ENCODE measurements at regions of chr22 and their contacts with region 1.

Region 1: DNA sequence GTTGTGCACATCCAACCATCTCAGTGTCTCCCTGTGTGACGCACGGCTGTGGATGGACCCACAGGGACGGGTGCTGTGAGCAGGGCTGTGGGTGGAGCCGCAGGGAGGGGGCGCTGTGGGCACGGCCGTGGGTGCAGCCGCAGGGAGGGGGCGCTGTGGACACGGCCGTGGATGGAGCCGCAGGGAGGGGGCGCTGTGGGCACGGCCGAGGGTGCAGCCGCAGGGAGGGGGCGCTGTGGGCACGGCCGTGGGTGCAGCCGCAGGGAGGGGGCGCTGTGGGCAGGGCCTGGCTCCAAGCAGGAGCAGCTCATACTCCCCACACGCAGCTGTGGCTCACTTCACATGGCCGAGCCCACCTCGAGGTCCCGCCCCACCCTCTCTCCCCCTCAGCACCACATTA is 6.0 kb upstream of the MAPK11 start:
- DNase-seq: peak in 1 of 2 experiments; percentile 77
- H3K4me3 ChIP-seq: no peak overlapping the region
- H3K27ac ChIP-seq: no peak overlapping the region
- H3K4me1 ChIP-seq: peaks cover under 1 to 8% (median 4%) of the 10 kb centered on the region in 4 experiments; a peak in 4 of 7 replicates
- H3K27me3 ChIP-seq: peaks cover under 1 to 5% (median 4%) of the 10 kb centered on the region in 4 experiments; a peak in 5 of 7 replicates
- CTCF ChIP-seq: peak; percentile 79 to 99 (median 91)
- EP300 ChIP-seq: no peak
- POLR2A ChIP-seq: no peak
- RAD21 ChIP-seq: peak in 1 of 2 experiments; percentile 36; a peak in 3 of 4 replicates

Region 2: GRCh38 chr22:50200461-50201190 is 75.5 kb before region 1 on chr22 and contains the start of gene SELENOO:
- CTCF ChIA-PET with region 1: no interaction called
- POLR2A ChIA-PET with region 1: no interaction called
- DNase-seq: peak; percentile 47 to 85
- H3K4me3 ChIP-seq: peak within 1 kb of the TSS; percentile 41 to 69 (median 64)
- H3K27ac ChIP-seq: no peak within 1 kb of the TSS
- H3K4me1 ChIP-seq: peaks cover 0 to 7% (median 5%) of the 10 kb centered on the region in 4 experiments; a peak in 6 of 7 replicates
- H3K27me3 ChIP-seq: no peaks in the 10 kb centered on the region
- CTCF ChIP-seq: no peak
- EP300 ChIP-seq: no peak
- POLR2A ChIP-seq: peak in 1 of 2 experiments; percentile 48; a peak in 1 of 3 replicates
- RAD21 ChIP-seq: no peak
- total RNA-seq, gene SELENOO: 16.8 and 18.6 TPM in 2 replicates

Region 3: GRCh38 chr22:50293441-50294318 is 17.5 kb after region 1 on chr22:
- CTCF ChIA-PET with region 1: interaction called, 27 read pairs
- POLR2A ChIA-PET with region 1: interaction called, 7 read pairs
- DNase-seq: peak in 1 of 2 experiments; percentile 90
- H3K4me3 ChIP-seq: peak overlapping the region; percentile 19 to 52 (median 24); a peak in 5 of 8 replicates
- H3K27ac ChIP-seq: peak overlapping the region; percentile 77; the same call in 1 of the 2 replicates
- H3K4me1 ChIP-seq: peaks cover 0 to 32% (median 21%) of the 10 kb centered on the region in 4 experiments; a peak in 6 of 7 replicates
- H3K27me3 ChIP-seq: no peaks in the 10 kb centered on the region
- CTCF ChIP-seq: no peak
- EP300 ChIP-seq: peak in 1 of 2 experiments; percentile 65; a peak in 1 of 3 replicates
- POLR2A ChIP-seq: no peak
- RAD21 ChIP-seq: no peak

Region 4: DNA sequence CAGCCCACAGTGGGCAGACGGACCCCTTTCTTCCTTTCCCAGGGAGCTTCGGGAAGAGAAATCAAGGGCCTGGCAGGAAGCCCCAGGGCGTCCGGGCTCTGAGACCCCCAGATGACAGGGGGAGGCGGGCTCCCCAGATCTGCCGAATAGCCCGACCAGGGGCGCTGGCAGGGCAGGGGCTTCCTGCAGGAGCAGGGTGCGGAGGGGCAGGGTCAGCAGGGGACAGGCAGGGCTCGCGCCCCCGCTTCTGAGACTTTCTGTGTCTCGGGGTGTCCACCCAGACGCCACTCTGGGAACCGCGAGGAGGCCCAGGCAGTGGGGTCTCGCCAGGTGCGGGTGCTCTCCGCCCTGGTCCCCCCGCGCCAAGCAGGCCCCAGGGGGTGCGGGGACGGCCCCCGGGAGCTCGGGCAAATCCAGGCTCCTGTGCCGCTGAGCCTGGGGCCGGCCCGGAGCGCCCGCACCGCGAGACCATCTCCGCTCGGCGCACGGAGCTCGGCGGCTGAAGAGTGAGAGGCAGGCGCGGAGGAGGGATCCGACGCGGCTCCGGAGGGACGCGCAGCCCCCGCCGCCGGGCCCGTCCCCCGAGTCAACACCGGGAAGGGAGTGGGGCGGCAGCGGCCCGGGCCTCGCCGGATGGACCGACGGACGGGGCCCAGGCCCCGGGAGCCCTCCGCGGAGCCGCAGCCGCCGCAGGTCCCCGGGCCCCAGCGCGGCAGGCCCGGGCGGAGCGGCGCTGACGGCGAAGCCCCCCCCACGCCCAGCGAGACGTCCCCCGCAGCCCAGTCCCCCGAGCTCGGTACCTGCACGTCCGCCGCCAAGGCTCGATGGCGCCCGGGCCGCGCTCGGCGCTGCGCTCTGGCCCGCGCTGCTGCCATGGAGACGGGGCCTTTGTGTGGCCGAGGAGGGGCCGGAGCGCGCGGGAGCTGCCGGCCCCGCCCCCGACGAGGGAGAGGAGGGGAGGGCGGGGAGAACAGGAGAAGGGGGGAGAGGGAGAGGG is 30.9 kb after region 1 on chr22 and contains the start of gene PLXNB2:
- CTCF ChIA-PET with region 1: interaction called, 16 read pairs
- POLR2A ChIA-PET with region 1: no interaction called
- DNase-seq: peak in 1 of 2 experiments; percentile 78
- H3K4me3 ChIP-seq: peak within 1 kb of the TSS; percentile 64 to 70 (median 66)
- H3K27ac ChIP-seq: no peak within 1 kb of the TSS; the same call in 1 of the 2 replicates
- H3K4me1 ChIP-seq: peaks cover 3 to 36% (median 20%) of the 10 kb centered on the region in 4 experiments
- H3K27me3 ChIP-seq: no peaks in the 10 kb centered on the region; a peak in 2 of 7 replicates
- CTCF ChIP-seq: no peak
- EP300 ChIP-seq: no peak
- POLR2A ChIP-seq: 0 out of 3 replicates have a peak, but pooled peaks of 1 of the 2 experiments have one; percentile 20
- RAD21 ChIP-seq: no peak
- total RNA-seq, gene PLXNB2: 92.8 and 106 TPM in 2 replicates

Region 5: GRCh38 chr22:50326959-50327710 is 51.0 kb after region 1 on chr22 and contains the start of gene DENND6B:
- CTCF ChIA-PET with region 1: interaction called, 24 read pairs
- POLR2A ChIA-PET with region 1: interaction called, 4 read pairs
- DNase-seq: peak in 1 of 2 experiments; percentile 86
- H3K4me3 ChIP-seq: peak within 1 kb of the TSS; percentile 64 to 84 (median 69)
- H3K27ac ChIP-seq: no peak within 1 kb of the TSS; the same call in 1 of the 2 replicates
- H3K4me1 ChIP-seq: peaks cover 0 to 8% (median 2%) of the 10 kb centered on the region in 4 experiments; a peak in 4 of 7 replicates
- H3K27me3 ChIP-seq: peaks cover 1 to 13% (median 12%) of the 10 kb centered on the region in 4 experiments; a peak in 6 of 7 replicates
- CTCF ChIP-seq: peak; percentile 56 to 90 (median 59)
- EP300 ChIP-seq: no peak
- POLR2A ChIP-seq: peak in 1 of 2 experiments; percentile 54; a peak in 1 of 3 replicates
- RAD21 ChIP-seq: peak; percentile 15 to 63; a peak in 3 of 4 replicates
- total RNA-seq, gene DENND6B: 1.1 TPM in 2 replicates

Measured in H1 (cell line).